RWPE1 (cell line): ENCODE measurements at regions of chr20 and their contacts with region 1.

Region 1: DNA sequence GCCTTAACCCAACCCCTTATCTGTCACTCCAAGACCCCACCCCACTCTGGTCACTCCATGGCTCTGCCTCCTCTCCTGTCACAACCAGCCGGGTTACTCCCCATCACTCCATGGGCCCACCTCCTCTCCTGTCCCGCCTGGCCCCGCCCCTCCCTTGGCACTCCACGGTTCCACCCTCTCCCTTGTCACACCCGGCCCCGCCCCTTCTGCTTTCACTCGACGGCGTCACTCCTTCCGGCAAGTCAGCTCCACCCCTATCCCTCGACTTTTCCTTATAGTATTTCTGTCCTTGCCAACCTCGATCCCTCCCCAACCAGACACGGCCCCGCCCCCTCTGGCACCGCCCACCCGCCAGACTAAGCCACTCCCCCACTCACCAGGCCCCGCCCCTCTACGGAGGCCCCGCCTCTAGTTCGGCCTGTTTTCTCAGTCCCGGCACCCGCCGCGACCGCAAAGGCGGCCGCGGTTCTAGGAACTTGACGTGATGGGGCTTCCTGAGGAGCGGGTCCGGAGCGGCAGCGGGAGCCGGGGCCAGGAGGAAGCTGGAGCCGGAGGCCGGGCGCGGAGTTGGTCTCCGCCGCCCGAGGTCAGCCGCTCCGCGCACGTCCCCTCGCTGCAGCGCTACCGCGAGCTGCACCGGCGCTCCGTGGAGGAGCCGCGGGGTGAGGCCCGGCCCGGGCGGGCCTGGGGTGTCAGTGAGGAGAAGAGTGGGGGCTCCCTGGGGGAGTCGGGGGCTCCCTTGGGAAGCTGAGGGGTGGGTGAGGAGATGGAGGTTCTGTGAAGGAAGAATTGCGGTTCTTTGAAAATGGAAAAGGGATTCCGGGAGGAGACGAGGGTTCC is at the start of gene ACSS2:
- DNase-seq: peak; percentile 100
- H3K27ac ChIP-seq: peak within 1 kb of the TSS; percentile 83
- CTCF ChIP-seq: no peak

Region 2: DNA sequence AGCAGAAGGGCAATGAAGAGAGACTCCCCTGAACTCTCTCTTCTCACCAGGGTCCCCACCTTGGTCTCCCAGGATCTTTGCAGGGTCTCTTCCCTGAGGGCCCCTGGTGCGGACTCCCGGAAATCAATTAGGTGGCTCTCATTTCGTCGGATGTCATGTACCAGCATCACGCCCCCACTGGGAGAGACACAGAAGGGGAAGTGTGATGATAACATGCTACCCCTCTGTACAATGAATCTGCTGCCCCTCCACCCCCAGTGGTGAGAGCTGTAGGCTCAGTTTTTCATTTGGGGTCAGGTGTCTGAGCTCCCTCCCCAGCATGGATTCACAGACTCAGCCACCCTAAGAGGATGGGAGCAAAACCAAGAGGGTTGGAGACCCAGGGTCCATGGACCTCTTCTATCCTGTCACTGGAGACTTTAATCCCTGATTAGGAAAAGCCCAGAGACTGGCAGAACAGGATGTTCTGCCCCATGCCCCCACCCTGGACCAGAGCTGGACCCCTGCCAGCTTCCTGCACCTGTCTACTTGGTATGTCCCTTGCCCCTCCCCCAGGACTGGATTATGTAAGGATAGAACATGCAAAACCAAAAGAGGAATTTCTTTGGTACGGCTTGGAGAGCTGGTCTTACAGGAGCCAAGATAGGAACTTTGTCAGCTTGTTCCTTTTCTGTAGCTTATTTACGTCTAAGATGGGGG is 14.8 kb before region 1 on chr20:
- CTCF ChIA-PET with region 1: interaction called, 18 read pairs
- POLR2A ChIA-PET with region 1: interaction called, 5 read pairs
- DNase-seq: peak; percentile 44
- H3K27ac ChIP-seq: no peak overlapping the region
- CTCF ChIP-seq: no peak

Region 3: DNA sequence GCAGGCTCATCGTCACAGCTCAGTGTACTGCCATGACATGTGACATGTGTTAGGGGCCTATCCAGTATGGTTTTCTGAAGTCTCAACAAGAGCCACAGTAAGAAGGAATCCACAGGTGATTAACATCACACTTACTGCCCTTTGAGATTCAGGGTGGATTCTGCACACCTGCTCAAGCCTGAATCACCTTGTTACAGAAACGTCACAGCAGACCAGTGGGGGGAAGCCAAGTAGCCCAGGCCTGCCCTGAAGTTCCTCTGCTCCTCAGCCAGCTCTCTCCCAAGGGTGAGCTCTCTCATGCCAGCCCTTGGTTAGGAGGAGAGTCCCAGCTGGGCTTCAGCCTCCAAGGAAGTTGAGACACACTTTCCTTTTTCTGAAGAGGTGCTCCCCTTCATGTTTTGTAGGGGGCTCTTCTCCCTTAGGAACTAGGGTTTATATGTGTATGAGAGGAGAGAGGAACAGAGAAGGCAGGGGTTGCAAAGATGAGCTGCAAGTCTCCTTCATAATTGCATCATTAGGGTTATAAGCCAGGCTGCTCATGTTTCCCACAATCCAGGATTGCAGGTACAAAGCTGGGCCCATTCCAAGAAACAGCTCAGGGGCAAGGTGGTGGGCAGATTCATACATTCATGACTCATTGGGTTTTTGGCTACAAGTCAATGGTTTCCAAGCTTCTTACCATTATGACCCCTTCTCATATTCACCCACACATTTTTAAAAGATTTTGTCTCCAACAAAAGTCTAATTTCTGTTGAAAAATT is 67.6 kb after region 1 on chr20:
- CTCF ChIA-PET with region 1: interaction called, 18 read pairs
- POLR2A ChIA-PET with region 1: no interaction called
- DNase-seq: peak; percentile 98
- H3K27ac ChIP-seq: peak overlapping the region; percentile 83
- CTCF ChIP-seq: no peak

Region 4: GRCh38 chr20:34955232-34956040 is 79.1 kb after region 1 on chr20 and contains the starts of genes GSS and MYH7B:
- CTCF ChIA-PET with region 1: interaction called, 57 read pairs
- POLR2A ChIA-PET with region 1: interaction called, 13 read pairs
- DNase-seq: peak; percentile 100
- H3K27ac ChIP-seq: peak within 1 kb of the TSS; percentile 88
- CTCF ChIP-seq: peak; percentile 82

Region 5: GRCh38 chr20:35001596-35002362 is 125.4 kb after region 1 on chr20:
- CTCF ChIA-PET with region 1: interaction called, 13 read pairs
- POLR2A ChIA-PET with region 1: no interaction called
- DNase-seq: no peak
- H3K27ac ChIP-seq: 0 out of 2 replicates have a peak overlapping the region, but pooled peaks have one; percentile 3
- CTCF ChIP-seq: no peak; the same call in 1 of the 2 replicates

Region 6: DNA sequence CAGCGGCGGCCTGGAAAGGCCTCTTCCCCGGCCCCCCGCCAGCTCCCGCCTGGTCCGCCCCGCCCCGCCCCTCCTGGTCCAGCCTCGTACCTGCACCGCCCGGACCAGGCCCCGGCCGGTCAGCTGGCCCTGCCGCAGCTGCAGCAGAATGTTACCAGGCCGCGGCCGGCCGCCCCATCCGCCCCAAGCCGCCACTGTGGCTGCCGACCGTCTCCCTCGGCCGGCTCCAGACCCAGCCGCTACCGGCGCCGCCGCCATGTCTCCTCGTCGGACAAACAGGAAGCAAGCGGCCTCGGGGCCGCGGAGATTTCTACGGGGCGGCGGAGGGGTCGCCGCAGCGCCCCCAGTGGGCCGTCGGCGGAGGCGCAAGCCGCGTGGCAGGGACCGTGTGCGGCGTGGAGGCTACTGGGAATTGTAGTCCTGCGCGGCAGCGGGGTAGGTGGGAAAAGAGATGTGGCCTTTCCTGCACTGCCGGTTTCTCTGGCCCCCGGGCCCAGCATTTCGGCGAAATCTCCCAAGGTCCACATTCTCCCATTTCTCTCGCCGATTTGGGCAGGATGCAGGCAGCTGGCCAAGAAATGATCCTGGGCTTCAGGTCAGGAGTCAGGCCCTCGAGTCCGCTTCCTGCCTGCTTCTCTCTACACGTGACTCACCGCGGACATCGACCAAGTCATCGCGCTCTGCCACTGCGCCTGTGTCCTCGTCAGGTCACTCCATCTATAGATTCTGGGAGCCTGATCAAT is 216.3 kb after region 1 on chr20 and contains the start of gene TRPC4AP:
- CTCF ChIA-PET with region 1: interaction called, 11 read pairs
- POLR2A ChIA-PET with region 1: no interaction called
- DNase-seq: peak; percentile 95
- H3K27ac ChIP-seq: peak within 1 kb of the TSS; percentile 80
- CTCF ChIP-seq: peak; percentile 100